ENCODE measurements at regions of chr17 and their contacts with region 1.

Region 1: DNA sequence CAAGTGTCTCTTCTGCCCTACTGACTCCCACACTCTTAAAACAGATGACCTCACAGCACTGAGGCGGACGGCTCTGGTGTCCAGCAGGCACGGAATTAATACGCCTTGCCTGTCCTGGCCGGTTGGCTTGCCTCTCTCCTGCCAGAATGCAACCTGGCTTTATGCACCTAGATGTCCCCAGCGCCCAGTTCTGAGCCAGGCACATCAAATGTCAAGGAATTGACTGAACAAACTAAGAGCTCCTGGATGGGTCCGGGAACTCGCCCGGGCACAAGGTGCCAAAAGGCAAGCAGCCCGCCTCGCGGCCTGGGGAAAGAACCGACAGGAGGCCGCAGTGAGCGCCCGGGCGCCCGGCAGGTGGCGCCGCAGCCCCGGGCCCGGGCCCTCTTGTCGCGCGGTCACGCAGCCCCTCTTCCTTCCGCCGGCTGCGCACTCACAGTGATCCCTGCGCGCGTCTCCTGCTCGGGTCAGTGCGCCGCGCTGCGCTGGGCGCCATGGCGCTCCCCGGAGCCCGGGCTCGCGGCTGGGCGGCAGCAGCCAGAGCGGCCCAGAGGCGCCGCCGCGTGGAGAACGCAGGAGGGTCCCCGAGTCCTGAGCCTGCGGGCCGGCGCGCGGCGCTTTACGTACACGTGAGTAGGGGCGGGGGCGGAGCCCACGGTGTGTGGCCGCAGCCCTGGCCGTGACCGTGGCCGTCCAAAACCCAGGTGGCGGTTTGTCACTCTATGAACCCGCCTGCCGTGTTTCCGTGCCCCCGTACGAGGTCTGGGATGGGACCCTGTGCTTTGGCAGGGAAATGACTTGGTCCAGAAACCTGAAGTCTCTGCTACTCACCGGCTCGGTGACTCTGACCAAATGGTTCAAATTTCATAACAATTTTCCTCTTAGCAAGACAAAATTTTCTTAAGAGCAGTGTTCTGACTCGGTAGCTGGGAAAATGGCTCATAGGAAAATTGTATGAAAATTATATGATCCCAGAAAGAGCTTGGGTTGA is at the start of gene RSAD1:
- DNase-seq: peak; percentile 24 to 93
- H3K4me3 ChIP-seq: peak within 1 kb of the TSS; percentile 68 to 71
- H3K27ac ChIP-seq: peak within 1 kb of the TSS; percentile 79 to 88
- H3K4me1 ChIP-seq: peaks cover 7 to 27% of the 10 kb centered on the region in 2 donors
- H3K27me3 ChIP-seq: no peaks in the 10 kb centered on the region
- CTCF ChIP-seq: peak; percentile 73 to 98 (median 88)
- total RNA-seq, gene RSAD1: 36.7 TPM

Region 2: GRCh38 chr17:50397111-50397918 is 81.4 kb before region 1 on chr17 and contains the start of gene LRRC59:
- intact Hi-C with region 1: loop called (anchors 2 kb)
- DNase-seq: peak; percentile 36 to 94
- H3K4me3 ChIP-seq: peak within 1 kb of the TSS; percentile 93 to 98
- H3K27ac ChIP-seq: peak within 1 kb of the TSS; percentile 71 to 91
- H3K4me1 ChIP-seq: peaks cover 3 to 21% of the 10 kb centered on the region in 2 donors
- H3K27me3 ChIP-seq: no peaks in the 10 kb centered on the region
- CTCF ChIP-seq: peak; percentile 91 to 99 (median 97)
- total RNA-seq, gene LRRC59: 91.9 TPM

Region 3: GRCh38 chr17:50507871-50508572 is 29.3 kb after region 1 on chr17 and contains the start of gene MYCBPAP:
- intact Hi-C with region 1: loop called (anchors 2 kb)
- DNase-seq: peak; percentile 31 to 92
- H3K4me3 ChIP-seq: peak within 1 kb of the TSS; percentile 71 to 80
- H3K27ac ChIP-seq: peak within 1 kb of the TSS; percentile 28 to 80
- H3K4me1 ChIP-seq: peaks cover 3 to 4% of the 10 kb centered on the region in 2 donors
- H3K27me3 ChIP-seq: no peaks in the 10 kb centered on the region
- CTCF ChIP-seq: no peak
- total RNA-seq, gene MYCBPAP: 7.9 TPM

Region 4: GRCh38 chr17:50541716-50542688 is 63.3 kb after region 1 on chr17:
- intact Hi-C with region 1: loop called (anchors 1 kb)
- DNase-seq: peak; percentile 55 to 92
- H3K4me3 ChIP-seq: peak overlapping the region; percentile 64 to 75
- H3K27ac ChIP-seq: peak overlapping the region; percentile 28 to 52
- H3K4me1 ChIP-seq: peaks cover 3 to 16% of the 10 kb centered on the region in 2 donors
- H3K27me3 ChIP-seq: no peaks in the 10 kb centered on the region
- CTCF ChIP-seq: peak in 2 of 3 experiments; percentile 19 to 37

Region 5: DNA sequence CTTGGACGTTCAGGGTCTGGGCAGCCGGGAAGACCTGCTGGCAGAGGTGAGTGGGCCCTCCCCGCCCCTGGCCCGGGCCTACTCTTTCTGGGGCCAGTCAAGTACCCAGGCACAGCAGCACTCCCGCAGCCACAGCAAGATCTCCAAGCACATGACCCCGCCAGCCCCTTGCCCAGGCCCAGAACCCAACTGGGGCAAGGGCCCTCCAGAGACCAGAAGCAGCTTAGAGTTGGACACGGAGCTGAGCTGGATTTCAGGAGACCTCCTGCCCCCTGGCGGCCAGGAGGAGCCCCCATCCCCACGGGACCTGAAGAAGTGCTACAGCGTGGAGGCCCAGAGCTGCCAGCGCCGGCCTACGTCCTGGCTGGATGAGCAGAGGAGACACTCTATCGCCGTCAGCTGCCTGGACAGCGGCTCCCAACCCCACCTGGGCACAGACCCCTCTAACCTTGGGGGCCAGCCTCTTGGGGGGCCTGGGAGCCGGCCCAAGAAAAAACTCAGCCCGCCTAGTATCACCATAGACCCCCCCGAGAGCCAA is 147.4 kb after region 1 on chr17:
- intact Hi-C with region 1: loop called (anchors 2 kb)
- DNase-seq: peak in 1 of 2 donors; percentile 87
- H3K4me3 ChIP-seq: no peak overlapping the region
- H3K27ac ChIP-seq: no peak overlapping the region
- H3K4me1 ChIP-seq: peaks cover 0 to 1% of the 10 kb centered on the region in 2 donors
- H3K27me3 ChIP-seq: no peaks in the 10 kb centered on the region
- CTCF ChIP-seq: peak; percentile 66 to 85 (median 74)

Region 6: GRCh38 chr17:50697663-50698274 is 219.1 kb after region 1 on chr17:
- intact Hi-C with region 1: loop called (anchors 5 kb)
- DNase-seq: no peak
- H3K4me3 ChIP-seq: no peak overlapping the region
- H3K27ac ChIP-seq: no peak overlapping the region
- H3K4me1 ChIP-seq: peaks cover 4 to 5% of the 10 kb centered on the region in 2 donors
- H3K27me3 ChIP-seq: no peaks in the 10 kb centered on the region
- CTCF ChIP-seq: no peak

Region 7: GRCh38 chr17:50783193-50783660 is 304.5 kb after region 1 on chr17:
- intact Hi-C with region 1: loop called (anchors 5 kb)
- DNase-seq: peak in 1 of 2 donors; percentile 91
- H3K4me3 ChIP-seq: no peak overlapping the region
- H3K27ac ChIP-seq: no peak overlapping the region
- H3K4me1 ChIP-seq: peaks cover 0 to 4% of the 10 kb centered on the region in 2 donors
- H3K27me3 ChIP-seq: no peaks in the 10 kb centered on the region
- CTCF ChIP-seq: peak; percentile 98 to 100 (median 99)

Measured in ascending aorta (tissue), 2 donors.